ENCODE measurements at regions of chr2 and their contacts with region 1.

Region 1: DNA sequence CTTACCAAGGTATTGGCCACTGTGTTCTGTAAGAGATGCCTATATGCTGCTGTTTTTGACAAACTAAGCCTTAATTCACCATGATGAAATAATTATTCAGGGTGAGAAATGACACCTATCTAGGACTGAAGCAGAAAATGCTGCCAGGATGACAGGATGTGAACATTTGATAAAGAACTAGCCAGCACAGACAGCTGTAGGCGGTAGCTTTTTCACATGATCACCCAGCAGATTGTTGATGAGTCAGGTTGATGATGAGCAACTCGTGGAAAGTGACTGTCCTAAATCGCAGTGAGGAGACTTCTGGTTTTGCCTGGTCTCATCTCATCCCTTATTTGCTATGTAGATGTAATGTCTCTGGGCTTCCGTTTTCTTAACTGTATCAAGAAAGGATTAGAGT is 144.1 kb downstream of the PRPF40A start:
- DNase-seq: peak; percentile 70
- H3K4me3 Mint-ChIP-seq: no peak overlapping the region
- H3K27ac Mint-ChIP-seq: peak overlapping the region; percentile 19
- H3K4me1 Mint-ChIP-seq: peaks cover 5% of the 10 kb centered on the region
- H3K27me3 Mint-ChIP-seq: no peaks in the 10 kb centered on the region

Region 2: DNA sequence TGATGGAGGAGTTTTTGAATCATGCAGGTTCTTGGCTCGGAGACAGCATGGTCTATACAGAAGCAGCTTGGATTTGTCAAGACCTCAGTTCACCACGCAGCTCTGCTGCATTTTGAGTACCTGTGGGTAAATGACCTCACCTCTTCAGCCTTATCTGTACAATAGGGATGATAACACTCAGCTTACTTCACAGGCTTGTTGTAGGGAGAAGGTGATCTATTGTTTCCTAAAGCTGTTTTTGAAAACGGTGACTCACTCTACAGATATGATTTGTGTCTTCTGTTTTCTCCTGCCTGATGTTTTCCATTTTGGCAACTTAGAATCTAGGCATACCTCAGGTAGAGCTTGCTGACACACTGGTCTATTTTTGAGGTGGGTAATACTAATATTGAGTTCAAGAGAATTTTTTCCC is 157.9 kb before region 1 on chr2:
- intact Hi-C with region 1: loop called (anchors 1 kb)
- DNase-seq: peak; percentile 59
- H3K4me3 Mint-ChIP-seq: peak overlapping the region; percentile 24
- H3K27ac Mint-ChIP-seq: peak overlapping the region; percentile 87
- H3K4me1 Mint-ChIP-seq: peaks cover 31% of the 10 kb centered on the region
- H3K27me3 Mint-ChIP-seq: no peaks in the 10 kb centered on the region

Region 3: GRCh38 chr2:152445791-152446201 is 127.4 kb before region 1 on chr2:
- intact Hi-C with region 1: loop called (anchors 5 kb)
- DNase-seq: no peak
- H3K4me3 Mint-ChIP-seq: no peak overlapping the region
- H3K27ac Mint-ChIP-seq: peak overlapping the region; percentile 45
- H3K4me1 Mint-ChIP-seq: peaks cover 11% of the 10 kb centered on the region
- H3K27me3 Mint-ChIP-seq: peaks cover 6% of the 10 kb centered on the region

Region 4: GRCh38 chr2:152505495-152505906 is 67.7 kb before region 1 on chr2:
- intact Hi-C with region 1: loop called (anchors 5 kb)
- DNase-seq: no peak
- H3K4me3 Mint-ChIP-seq: no peak overlapping the region
- H3K27ac Mint-ChIP-seq: no peak overlapping the region
- H3K4me1 Mint-ChIP-seq: peaks cover 9% of the 10 kb centered on the region
- H3K27me3 Mint-ChIP-seq: no peaks in the 10 kb centered on the region